ENCODE measurements at regions of chrX and their contacts with region 1.

Region 1: DNA sequence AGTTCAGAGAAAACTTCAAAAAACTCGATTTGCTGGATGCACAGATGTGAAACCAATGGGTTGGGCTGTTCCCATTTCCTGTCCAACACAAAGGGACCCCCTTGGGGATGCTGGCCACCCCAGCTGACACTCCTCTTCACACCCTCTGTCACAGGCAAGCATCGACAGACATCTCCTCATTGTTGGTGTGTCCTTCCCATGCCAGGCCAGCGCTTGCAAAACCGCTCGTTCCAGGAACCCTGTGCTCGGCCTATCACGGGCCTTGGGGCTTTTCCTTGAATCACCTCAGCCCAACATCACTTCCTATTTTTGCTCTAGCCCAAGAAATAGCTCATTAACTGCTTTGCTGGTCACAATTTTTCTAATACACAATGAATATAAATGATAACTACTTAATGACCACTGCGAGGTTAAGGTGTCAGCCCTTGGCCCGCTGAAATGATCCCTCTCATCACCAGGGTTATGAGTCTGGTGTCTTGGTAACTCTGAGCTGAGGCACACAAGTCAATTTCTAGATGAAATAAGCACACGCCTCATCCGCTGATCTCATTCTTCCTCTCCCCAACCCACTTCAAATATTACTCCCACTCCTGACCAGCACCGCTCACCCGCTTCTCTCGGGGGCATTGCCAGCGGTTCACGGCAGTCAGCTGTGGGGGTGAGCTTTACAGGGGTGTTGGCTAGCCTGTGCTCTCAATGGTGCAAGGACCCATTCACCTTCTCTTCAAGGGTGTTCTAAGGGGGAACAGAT is 32.3 kb downstream of the BCOR start:
- DNase-seq: no peak
- ATAC-seq: no peak
- H3K4me3 ChIP-seq: no peak overlapping the region
- H3K27ac ChIP-seq: no peak overlapping the region
- H3K4me1 ChIP-seq: peaks cover 0 to 6% (median 0%) of the 10 kb centered on the region in 9 donors
- H3K27me3 ChIP-seq: peaks cover 0 to 18% (median 0%) of the 10 kb centered on the region in 7 donors
- CTCF ChIP-seq: no peak

Region 2: GRCh38 chrX:40049084-40049641 is 16.3 kb before region 1 on chrX:
- intact Hi-C with region 1: loop called in 1 of 10 experiments (anchors 2 kb)
- DNase-seq: no peak
- ATAC-seq: no peak
- H3K4me3 ChIP-seq: no peak overlapping the region
- H3K27ac ChIP-seq: no peak overlapping the region
- H3K4me1 ChIP-seq: no peaks in the 10 kb centered on the region
- H3K27me3 ChIP-seq: no peaks in the 10 kb centered on the region
- CTCF ChIP-seq: no peak